ENCODE measurements at regions of chr12 and their contacts with region 1.

Region 1: GRCh38 chr12:26287671-26288381 is 92.5 kb downstream of the SSPN start:
- DNase-seq: no peak
- H3K4me3 ChIP-seq: no peak overlapping the region
- H3K27me3 ChIP-seq: no peaks in the 10 kb centered on the region
- CTCF ChIP-seq: no peak

Region 2: DNA sequence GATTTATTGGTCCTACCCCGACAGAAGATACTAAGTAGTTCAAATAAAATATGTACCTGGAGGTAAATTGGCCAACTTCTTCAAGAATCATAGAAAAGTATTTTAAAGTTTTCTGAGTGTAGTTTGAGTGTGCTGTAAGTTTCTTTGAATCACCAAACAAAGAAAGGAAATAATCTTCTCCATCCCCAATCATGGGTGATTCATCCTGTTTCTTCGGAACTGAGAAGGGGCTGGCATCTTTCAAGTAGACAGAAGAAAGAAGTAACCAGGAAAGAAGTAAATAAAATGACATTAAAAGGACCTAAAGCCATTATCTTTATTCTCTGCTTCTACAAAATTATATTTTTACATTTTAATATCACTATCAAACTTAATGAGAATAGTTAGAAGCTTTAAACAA is 741.5 kb before region 1 on chr12:
- CTCF ChIA-PET with region 1: no interaction called
- POLR2A ChIA-PET with region 1: no interaction called
- DNase-seq: no peak
- H3K4me3 ChIP-seq: no peak overlapping the region
- H3K27me3 ChIP-seq: no peaks in the 10 kb centered on the region
- CTCF ChIP-seq: no peak

Region 3: GRCh38 chr12:26264215-26264838 is 23.5 kb before region 1 on chr12:
- CTCF ChIA-PET with region 1: no interaction called
- POLR2A ChIA-PET with region 1: no interaction called
- DNase-seq: no peak
- H3K4me3 ChIP-seq: no peak overlapping the region
- H3K27me3 ChIP-seq: peaks cover 2% of the 10 kb centered on the region; the same call in 1 of the 2 replicates
- CTCF ChIP-seq: 0 out of 2 replicates have a peak, but pooled peaks have one; percentile 3

Region 4: GRCh38 chr12:26298785-26299621 is 11.2 kb after region 1 on chr12:
- CTCF ChIA-PET with region 1: interaction called, 10 read pairs
- POLR2A ChIA-PET with region 1: no interaction called
- DNase-seq: peak; percentile 65
- H3K4me3 ChIP-seq: peak overlapping the region; percentile 31
- H3K27me3 ChIP-seq: no peaks in the 10 kb centered on the region
- CTCF ChIP-seq: peak; percentile 52

Measured in BJ (cell line).